Sigmoid colon (tissue), 7 donors: ENCODE measurements at regions of chr7 and their contacts with region 1.

Region 1: DNA sequence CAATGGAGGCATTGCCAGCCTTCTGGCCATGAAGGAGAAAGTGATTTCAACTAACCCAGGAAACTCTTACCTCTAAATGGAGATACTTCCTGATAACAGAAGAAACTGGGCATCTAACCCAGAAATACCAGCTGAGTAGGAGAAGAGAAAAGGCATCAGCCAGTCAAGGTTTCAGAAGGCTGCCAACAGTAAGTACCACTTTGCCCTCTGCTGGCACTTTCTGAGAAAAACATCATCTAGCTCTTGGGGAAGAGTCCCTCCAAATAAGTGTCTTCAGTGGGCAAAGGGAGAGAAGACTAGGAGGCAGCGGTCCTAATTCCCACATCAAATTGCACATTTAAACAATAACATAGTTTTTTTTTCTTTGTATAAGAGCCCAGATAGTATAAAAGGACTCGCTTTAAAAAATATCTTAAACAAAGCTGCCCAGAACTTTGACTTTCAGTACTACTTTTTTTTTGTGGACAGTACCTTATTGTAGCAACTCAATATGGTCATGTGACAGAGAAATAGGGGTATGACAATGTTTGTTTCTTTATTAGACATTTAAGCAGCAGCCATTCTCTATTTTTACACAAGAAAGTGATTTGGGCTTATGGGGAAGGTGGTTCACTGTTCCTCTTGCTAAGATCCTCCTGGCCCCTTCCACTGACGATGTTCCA is 157.3 kb downstream of the CTTNBP2 start:
- DNase-seq: no peak
- H3K4me3 ChIP-seq: no peak overlapping the region
- H3K27ac ChIP-seq: no peak overlapping the region
- H3K4me1 ChIP-seq: no peaks in the 10 kb centered on the region
- H3K27me3 ChIP-seq: no peaks in the 10 kb centered on the region
- CTCF ChIP-seq: peak in 3 of 4 experiments; percentile 23 to 49 (median 26)
- EP300 ChIP-seq: no peak
- POLR2A ChIP-seq: no peak

Region 2: DNA sequence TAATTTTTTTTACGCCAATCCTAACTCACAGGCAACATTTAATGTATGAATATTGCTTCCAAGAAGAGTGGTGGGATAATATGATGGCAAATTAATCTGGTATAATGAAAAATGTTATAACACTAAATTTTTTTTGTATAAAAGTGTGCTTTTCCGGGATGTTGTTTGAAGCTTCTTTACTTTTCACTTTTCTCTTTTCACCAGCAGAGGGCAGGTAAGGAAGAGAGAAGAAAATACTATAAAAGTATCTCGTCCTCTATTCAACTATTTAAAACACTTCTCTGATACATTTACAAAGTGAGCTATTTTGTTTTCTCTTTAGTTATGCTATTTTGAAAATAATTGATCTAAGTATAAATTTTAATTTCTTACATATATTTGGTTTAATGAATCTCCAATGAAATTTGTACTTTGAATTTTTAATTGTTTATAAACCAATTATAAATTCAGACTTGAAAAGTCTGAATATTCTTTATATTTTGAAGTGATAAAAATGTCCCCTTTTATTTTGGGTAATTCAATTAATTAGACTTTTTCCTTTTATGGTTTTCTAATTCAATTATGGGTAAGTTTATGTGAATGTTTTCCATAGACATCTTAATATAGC is 256.8 kb before region 1 on chr7:
- intact Hi-C with region 1: loop called (anchors 10 kb)
- DNase-seq: no peak
- H3K4me3 ChIP-seq: no peak overlapping the region
- H3K27ac ChIP-seq: no peak overlapping the region
- H3K4me1 ChIP-seq: no peaks in the 10 kb centered on the region
- H3K27me3 ChIP-seq: no peaks in the 10 kb centered on the region
- CTCF ChIP-seq: peak in 2 of 4 experiments; percentile 26 to 59
- EP300 ChIP-seq: no peak
- POLR2A ChIP-seq: no peak

Region 3: DNA sequence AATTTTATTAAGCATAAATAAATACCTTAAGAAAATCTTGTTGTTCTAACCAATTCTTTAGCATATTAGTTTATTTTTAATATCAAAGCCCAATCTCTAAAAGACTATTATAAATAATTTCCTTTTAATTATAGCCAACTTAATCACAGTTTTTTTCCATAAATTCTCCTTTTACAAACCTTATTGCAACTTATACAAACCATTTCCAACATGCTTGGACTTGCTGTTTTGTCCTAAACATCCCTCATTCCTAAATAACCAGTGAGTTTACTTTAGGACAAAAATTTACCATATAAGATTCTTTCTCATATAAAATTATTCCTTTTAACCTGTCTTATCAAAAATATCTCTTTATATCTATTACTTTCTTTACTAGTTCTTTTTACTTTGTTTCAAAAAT is 442.9 kb after region 1 on chr7:
- intact Hi-C with region 1: no loop called
- DNase-seq: no peak
- H3K4me3 ChIP-seq: no peak overlapping the region
- H3K27ac ChIP-seq: no peak overlapping the region
- H3K4me1 ChIP-seq: no peaks in the 10 kb centered on the region
- H3K27me3 ChIP-seq: no peaks in the 10 kb centered on the region
- CTCF ChIP-seq: no peak
- EP300 ChIP-seq: no peak
- POLR2A ChIP-seq: no peak